ENCODE measurements at regions of chr15 and their contacts with region 1.

Region 1: GRCh38 chr15:88620995-88621772 is at the start of gene AEN:
- DNase-seq: peak; percentile 97
- total RNA-seq, gene AEN: 93.3 and 108 TPM in 2 replicates

Region 2: DNA sequence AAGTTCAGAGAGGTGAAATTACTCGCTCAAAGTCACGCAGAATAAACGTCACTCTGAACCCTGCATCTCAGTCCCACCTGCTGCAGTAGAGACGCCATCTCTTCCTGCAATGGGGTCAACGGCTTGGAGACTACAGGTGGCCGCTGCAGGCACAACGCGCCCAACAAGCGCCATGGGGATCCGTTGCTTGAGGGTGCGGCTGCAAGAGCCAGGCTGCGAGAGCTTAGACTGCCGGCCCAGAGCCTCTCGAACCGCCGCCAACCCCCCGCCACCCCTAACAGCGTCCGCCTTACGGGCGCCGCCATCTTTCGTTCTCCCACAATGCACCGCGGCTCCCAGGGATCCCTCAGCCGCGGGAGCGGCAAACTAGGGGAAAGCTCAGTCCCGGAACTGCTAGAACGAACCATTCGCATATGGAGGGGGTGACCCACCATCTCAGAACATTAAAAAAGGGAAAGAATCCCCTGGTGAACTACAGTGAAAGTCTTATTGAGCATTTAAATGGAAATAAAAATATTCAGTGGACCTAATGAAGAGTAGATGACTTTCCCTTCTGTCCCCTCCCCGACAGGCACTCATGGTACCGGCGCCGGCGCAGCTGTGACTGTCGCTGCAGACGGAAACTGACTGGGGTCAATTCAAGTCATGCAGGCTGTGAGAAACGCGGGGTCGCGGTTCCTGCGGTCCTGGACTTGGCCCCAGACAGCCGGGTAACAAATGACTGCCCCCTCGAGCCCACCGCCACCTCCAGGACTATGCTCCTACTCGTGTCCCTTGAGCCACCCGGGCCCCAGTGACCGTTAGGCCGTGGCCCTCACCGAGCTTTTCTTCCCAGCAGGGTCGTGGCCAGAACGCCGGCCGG is 153.9 kb before region 1 on chr15 and contains the starts of genes MRPL46 and MRPS11:
- in situ Hi-C with region 1: loop called (anchors 25 kb)
- DNase-seq: peak; percentile 88
- total RNA-seq, gene MRPL46: 39.7 and 45.8 TPM in 2 replicates
- total RNA-seq, gene MRPS11: 92.6 and 92.9 TPM in 2 replicates

Region 3: DNA sequence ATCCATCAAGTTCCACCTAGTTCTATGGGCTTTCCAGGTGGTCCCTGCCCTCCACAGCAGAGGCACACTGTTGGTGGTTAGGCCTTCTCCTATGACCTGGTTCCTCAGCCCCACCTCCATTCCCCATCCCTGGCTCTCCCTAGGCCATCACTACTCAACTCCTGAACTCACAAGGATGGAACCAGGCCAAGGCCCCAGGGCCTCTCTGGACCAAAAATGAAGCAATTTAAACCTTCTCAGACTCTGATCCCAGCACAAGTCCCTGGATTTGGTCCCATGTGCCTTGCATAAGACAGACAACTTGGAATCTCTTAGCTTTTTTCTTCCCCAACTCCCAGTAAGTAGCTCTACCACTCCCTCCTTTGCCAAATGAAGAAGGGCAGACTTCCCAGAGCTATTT is 167.6 kb after region 1 on chr15:
- in situ Hi-C with region 1: no loop called
- DNase-seq: no peak

Measured in SK-MEL-5 (cell line).